GM10248 (cell line): ENCODE measurements at regions of chr11 and their contacts with region 1.

Region 1: GRCh38 chr11:17528181-17528691 is 16.0 kb downstream of the USH1C start:
- DNase-seq: peak; percentile 78
- CTCF ChIP-seq: peak; percentile 58

Region 2: DNA sequence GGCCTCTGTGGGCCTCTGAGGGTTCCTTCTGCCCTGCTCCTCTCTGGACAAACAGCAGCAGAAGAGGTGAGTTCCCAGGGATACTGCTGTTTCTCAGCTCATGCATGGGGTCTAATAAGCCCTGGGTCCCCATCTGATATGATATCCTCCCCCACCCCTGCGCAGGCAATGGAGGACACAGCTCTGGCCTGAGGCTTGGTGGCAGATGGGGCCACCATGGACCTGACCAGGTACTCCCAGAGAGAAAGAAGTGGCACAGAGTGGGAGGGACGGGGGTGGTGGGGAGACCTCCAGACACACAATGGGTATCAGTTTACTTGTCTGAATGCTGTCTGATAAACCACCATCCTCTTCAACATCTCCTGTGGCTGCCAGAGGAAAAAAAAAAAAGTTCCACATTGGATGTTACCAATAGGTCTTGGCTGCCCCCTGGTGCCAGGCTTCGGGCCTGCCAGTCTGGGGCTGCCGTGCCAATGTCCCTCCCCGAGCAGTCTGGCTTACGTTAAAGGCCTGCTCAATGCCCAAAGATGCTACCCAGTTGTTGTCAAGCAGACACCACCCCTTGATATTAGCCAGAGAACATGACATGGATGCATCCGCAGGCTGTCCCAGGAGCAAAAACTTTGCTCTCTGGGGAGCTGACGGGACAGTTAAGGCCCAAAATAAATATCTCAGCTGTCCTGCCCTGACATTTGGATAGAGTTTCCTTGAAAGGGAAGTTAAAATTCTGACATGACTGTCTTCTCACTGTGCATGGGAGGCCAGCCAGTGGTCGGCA is 23.7 kb before region 1 on chr11:
- CTCF ChIA-PET with region 1: interaction called, 12 read pairs
- POLR2A ChIA-PET with region 1: no interaction called
- DNase-seq: peak; percentile 77
- CTCF ChIP-seq: peak; percentile 90

Region 3: GRCh38 chr11:17552392-17553248 is 24.4 kb after region 1 on chr11:
- CTCF ChIA-PET with region 1: interaction called, 10 read pairs
- POLR2A ChIA-PET with region 1: no interaction called
- DNase-seq: no peak
- CTCF ChIP-seq: no peak